ENCODE measurements at regions of chr7 and their contacts with region 1.

Region 1: DNA sequence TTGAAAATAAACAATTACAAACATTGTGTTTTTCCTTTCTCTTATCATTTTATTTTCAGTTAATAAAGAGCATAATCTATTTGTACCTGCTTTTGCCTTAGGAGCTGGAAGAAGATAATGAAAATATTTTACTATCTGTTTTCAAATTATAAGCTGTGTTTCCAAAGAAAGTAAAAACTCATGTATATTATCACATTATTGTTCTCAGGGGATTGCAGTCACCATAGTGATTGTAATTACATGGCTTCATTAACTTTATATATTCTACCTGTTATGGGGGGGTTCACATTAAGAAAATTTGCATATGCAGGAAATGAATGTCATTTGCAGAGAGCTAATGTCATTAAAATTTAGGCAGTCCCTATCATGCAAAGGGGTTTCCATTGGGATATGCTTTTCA is 542.3 kb downstream of the NXPH1 start:
- DNase-seq: no peak
- ATAC-seq: no peak

Region 2: GRCh38 chr7:8991159-8991558 is 15.5 kb after region 1 on chr7:
- intact Hi-C with region 1: loop called (anchors 2 kb)
- DNase-seq: no peak
- ATAC-seq: no peak

Measured in left ventricle myocardium superior (tissue), 1 donor.